CD4-positive, alpha-beta memory T cell (primary cell): ENCODE measurements at regions of chr19 and their contacts with region 1.

Region 1: DNA sequence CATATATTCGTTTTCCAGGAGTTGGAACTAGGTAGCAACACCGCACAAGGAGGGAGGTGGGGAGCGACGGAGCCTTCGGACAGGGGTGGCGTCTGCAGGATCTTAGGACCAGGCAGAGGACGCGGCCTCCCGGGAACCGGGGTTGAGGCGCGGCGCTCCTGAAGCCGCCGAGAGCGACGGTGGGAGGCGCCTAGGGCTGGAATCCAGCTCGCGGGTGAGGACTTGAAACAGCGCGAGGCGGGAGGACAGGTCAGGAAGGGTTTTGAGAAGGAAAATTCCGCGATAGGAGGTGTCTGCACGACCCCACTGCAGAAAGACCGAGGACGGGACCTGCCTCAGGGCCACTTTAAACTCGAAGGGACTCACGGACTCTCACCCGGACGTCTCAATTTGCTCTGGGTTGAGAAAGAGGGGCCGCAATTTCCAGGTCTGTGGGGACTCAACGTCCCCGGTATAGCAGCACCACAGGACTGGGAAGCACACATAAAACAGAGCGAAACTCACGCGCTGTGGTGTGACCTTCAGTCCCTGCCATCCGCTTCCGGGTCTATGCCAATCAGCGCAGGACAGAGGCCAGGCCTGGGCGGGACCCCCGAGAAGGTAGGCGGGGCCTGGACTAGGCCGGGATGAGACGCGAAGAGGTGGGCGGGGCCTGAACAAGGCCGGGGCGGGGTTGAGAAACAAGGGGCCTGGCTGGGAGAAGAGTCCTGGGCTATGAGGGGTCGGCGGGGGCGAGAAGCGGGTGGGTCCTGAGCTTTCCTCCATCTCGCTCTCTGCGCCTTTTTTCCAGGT is at the start of gene ZNF320:
- DNase-seq: peak; percentile 88 to 92 (median 89)
- H3K4me3 ChIP-seq: peak within 1 kb of the TSS; percentile 77 to 95
- H3K4me3 Mint-ChIP-seq: peak within 1 kb of the TSS; percentile 90 to 96 (median 94)
- H3K27ac ChIP-seq: peak within 1 kb of the TSS; percentile 69
- H3K27ac Mint-ChIP-seq: peak within 1 kb of the TSS; percentile 83 to 97 (median 94)
- H3K4me1 ChIP-seq: peaks cover 14% of the 10 kb centered on the region
- H3K4me1 Mint-ChIP-seq: peaks cover 3 to 24% (median 22%) of the 10 kb centered on the region in 4 donors
- H3K27me3 ChIP-seq: no peaks in the 10 kb centered on the region
- H3K27me3 Mint-ChIP-seq: no peaks in the 10 kb centered on the region
- total RNA-seq, gene ZNF320: 14.1 to 15.6 TPM

Region 2: GRCh38 chr19:52942386-52943133 is 45.2 kb after region 1 on chr19:
- CTCF ChIA-PET with region 1: no interaction called
- POLR2A ChIA-PET with region 1: no interaction called
- intact Hi-C with region 1: loop called (anchors 1 kb)
- DNase-seq: peak; percentile 95 to 98 (median 97)
- H3K4me3 ChIP-seq: peak overlapping the region; percentile 68 to 84
- H3K4me3 Mint-ChIP-seq: peak overlapping the region; percentile 88 to 98 (median 96)
- H3K27ac ChIP-seq: peak overlapping the region; percentile 72
- H3K27ac Mint-ChIP-seq: peak overlapping the region; percentile 91 to 98 (median 95)
- H3K4me1 ChIP-seq: peaks cover 17% of the 10 kb centered on the region
- H3K4me1 Mint-ChIP-seq: peaks cover 10 to 32% (median 24%) of the 10 kb centered on the region in 4 donors
- H3K27me3 ChIP-seq: no peaks in the 10 kb centered on the region
- H3K27me3 Mint-ChIP-seq: no peaks in the 10 kb centered on the region